Caco-2 (cell line): ENCODE measurements at regions of chr12 and their contacts with region 1.

Region 1: GRCh38 chr12:19095756-19096480 is 33.6 kb upstream of the PLEKHA5 start:
- DNase-seq: peak in 1 of 2 experiments; percentile 18
- H3K4me3 ChIP-seq: peak overlapping the region; percentile 13; the same call in 1 of the 2 replicates
- H3K4me3 Mint-ChIP-seq: peak overlapping the region; percentile 34
- H3K27ac Mint-ChIP-seq: peak overlapping the region; percentile 47
- H3K4me1 ChIP-seq: peaks cover 23% of the 10 kb centered on the region
- H3K4me1 Mint-ChIP-seq: peaks cover 22% of the 10 kb centered on the region
- H3K27me3 ChIP-seq: no peaks in the 10 kb centered on the region
- H3K27me3 Mint-ChIP-seq: no peaks in the 10 kb centered on the region
- CTCF ChIP-seq: no peak

Region 2: GRCh38 chr12:19014240-19014639 is 81.7 kb before region 1 on chr12:
- CTCF ChIA-PET with region 1: no interaction called
- POLR2A ChIA-PET with region 1: no interaction called
- intact Hi-C with region 1: loop called (anchors 2 kb)
- DNase-seq: no peak
- H3K4me3 ChIP-seq: no peak overlapping the region
- H3K4me3 Mint-ChIP-seq: no peak overlapping the region
- H3K27ac Mint-ChIP-seq: no peak overlapping the region
- H3K4me1 ChIP-seq: peaks cover 17% of the 10 kb centered on the region
- H3K4me1 Mint-ChIP-seq: peaks cover 29% of the 10 kb centered on the region
- H3K27me3 ChIP-seq: no peaks in the 10 kb centered on the region
- H3K27me3 Mint-ChIP-seq: no peaks in the 10 kb centered on the region
- CTCF ChIP-seq: no peak

Region 3: GRCh38 chr12:19066475-19067001 is 29.4 kb before region 1 on chr12:
- CTCF ChIA-PET with region 1: interaction called, 4 read pairs
- POLR2A ChIA-PET with region 1: no interaction called
- intact Hi-C with region 1: loop called (anchors 1 kb)
- DNase-seq: peak in 1 of 2 experiments; percentile 27
- H3K4me3 ChIP-seq: peak overlapping the region; percentile 12; the same call in 1 of the 2 replicates
- H3K4me3 Mint-ChIP-seq: peak overlapping the region; percentile 61
- H3K27ac Mint-ChIP-seq: peak overlapping the region; percentile 68
- H3K4me1 ChIP-seq: peaks cover 26% of the 10 kb centered on the region
- H3K4me1 Mint-ChIP-seq: peaks cover 32% of the 10 kb centered on the region
- H3K27me3 ChIP-seq: no peaks in the 10 kb centered on the region
- H3K27me3 Mint-ChIP-seq: no peaks in the 10 kb centered on the region
- CTCF ChIP-seq: no peak

Region 4: DNA sequence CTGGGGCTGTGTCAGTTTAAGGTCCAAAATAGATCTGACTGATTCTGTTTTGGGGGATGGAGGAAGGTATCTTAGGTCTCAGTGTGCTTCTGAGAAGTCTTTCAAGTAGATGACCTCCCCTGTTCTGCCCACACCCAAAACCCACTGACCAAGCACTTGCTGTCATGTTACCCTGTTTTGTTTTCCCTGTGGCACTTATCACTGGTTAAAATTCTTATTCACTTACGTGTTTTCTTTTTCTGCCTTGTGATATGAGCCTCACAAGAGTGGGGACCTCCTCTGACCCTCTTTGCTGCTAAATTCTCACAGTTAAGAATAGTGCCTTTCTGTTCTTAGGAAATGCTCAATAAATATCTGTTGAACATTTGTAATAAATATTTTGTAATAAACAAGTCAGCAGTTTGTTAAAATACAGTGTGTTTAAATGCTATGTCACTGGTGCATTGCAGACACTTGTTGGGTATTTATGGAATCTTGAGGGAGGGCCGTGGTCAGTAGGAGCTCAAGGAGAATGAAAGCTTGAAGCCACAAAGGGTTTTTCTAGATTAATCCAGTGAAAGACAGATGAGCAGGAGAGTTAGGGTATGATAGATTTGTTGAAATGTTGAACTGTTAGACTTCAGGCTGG is 54.5 kb after region 1 on chr12:
- CTCF ChIA-PET with region 1: no interaction called
- POLR2A ChIA-PET with region 1: no interaction called
- intact Hi-C with region 1: no loop called
- DNase-seq: no peak
- H3K4me3 ChIP-seq: no peak overlapping the region
- H3K4me3 Mint-ChIP-seq: no peak overlapping the region
- H3K27ac Mint-ChIP-seq: peak overlapping the region; percentile 20
- H3K4me1 ChIP-seq: peaks cover 15% of the 10 kb centered on the region
- H3K4me1 Mint-ChIP-seq: peaks cover 17% of the 10 kb centered on the region
- H3K27me3 ChIP-seq: no peaks in the 10 kb centered on the region
- H3K27me3 Mint-ChIP-seq: no peaks in the 10 kb centered on the region
- CTCF ChIP-seq: no peak

Region 5: GRCh38 chr12:19236656-19237055 is 140.7 kb after region 1 on chr12:
- CTCF ChIA-PET with region 1: no interaction called
- POLR2A ChIA-PET with region 1: no interaction called
- intact Hi-C with region 1: no loop called
- DNase-seq: no peak
- H3K4me3 ChIP-seq: no peak overlapping the region
- H3K4me3 Mint-ChIP-seq: no peak overlapping the region
- H3K27ac Mint-ChIP-seq: no peak overlapping the region
- H3K4me1 ChIP-seq: no peaks in the 10 kb centered on the region
- H3K4me1 Mint-ChIP-seq: peaks cover 15% of the 10 kb centered on the region
- H3K27me3 ChIP-seq: no peaks in the 10 kb centered on the region
- H3K27me3 Mint-ChIP-seq: no peaks in the 10 kb centered on the region
- CTCF ChIP-seq: no peak